Activated CD4-positive, alpha-beta memory T cell treated with anti-CD3 and anti-CD28 coated beads for 36 hours (primary cell): ENCODE measurements at regions of chr9 and their contacts with region 1.

Region 1: DNA sequence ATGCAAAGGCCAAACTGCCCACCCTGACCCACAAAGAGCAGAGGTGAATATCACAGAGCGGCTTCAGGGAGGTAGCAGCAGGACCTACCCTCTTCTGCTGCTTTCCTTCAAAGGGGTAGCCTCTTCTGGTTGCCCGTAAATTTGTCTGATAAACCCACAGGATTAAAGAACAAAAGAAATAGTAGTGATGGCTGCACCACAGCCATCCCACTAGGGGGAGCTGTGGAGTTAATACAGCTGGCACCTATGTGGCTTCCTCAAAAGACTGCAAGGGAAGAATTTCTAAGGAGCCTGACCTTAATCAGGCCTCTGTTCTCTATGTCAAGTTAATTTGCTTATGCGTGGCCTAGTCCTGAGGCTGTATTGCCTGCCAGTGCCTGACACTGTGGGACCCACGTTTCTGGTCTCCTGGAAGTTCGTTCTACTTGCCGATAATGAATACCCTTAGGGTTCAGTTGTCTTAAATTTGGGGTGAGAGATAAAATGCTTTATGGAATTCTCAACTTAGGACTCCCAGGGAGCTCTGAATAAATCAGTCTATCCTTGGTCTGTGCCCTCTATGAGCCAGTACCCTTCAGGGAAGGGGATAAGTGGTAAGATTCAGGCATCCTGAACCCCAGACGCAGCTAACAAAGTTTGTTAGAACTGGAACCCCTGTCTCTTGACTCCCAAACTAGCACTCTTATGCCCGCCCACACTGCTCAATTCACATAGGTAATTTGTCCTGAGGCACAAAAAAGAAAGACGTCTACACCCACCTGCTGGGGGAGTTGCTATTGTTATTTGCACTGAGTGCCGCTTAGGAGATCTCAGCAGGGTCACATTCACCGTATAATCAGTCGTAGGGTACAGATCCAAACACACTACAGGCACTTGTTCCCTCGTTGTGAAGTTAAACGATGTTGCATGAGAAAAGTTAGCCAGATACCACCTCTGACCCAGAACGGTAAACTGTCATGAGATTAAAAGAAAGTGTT is 77.1 kb downstream of the SUSD1 start:
- DNase-seq: peak; percentile 74
- H3K4me3 Mint-ChIP-seq: no peak overlapping the region
- H3K27ac Mint-ChIP-seq: no peak overlapping the region
- H3K4me1 Mint-ChIP-seq: peaks cover 22% of the 10 kb centered on the region
- H3K27me3 Mint-ChIP-seq: no peaks in the 10 kb centered on the region

Region 2: DNA sequence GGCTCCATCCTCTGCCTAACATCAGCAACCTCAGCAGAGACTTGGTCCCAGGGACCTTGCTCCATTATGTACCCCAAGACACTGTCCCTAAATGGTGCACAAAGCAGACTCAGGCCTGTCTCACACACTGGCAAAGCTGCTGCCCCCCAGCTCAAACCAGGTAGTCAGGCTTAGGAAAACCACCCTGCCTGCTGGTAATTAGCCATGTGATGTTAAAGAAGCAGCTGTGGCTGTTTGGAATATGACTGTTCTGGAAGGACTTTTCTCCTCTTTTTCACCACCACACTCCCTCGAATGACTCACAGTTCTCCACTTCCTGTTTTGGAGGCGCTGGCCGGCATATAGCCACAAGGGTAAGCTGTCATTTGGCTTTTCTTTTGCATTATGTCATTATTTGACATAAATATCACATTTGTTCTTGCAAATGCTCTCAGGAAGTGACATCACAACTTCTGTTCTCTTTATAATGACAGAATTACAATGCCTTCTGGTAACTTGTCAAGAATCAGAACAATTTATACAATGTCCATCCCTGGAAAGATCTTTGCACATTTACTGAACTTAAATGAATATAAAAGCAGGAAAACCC is 36.8 kb before region 1 on chr9:
- CTCF ChIA-PET with region 1: no interaction called
- POLR2A ChIA-PET with region 1: no interaction called
- intact Hi-C with region 1: no loop called
- DNase-seq: peak; percentile 71
- H3K4me3 Mint-ChIP-seq: no peak overlapping the region
- H3K27ac Mint-ChIP-seq: no peak overlapping the region
- H3K4me1 Mint-ChIP-seq: peaks cover 20% of the 10 kb centered on the region
- H3K27me3 Mint-ChIP-seq: no peaks in the 10 kb centered on the region

Region 3: DNA sequence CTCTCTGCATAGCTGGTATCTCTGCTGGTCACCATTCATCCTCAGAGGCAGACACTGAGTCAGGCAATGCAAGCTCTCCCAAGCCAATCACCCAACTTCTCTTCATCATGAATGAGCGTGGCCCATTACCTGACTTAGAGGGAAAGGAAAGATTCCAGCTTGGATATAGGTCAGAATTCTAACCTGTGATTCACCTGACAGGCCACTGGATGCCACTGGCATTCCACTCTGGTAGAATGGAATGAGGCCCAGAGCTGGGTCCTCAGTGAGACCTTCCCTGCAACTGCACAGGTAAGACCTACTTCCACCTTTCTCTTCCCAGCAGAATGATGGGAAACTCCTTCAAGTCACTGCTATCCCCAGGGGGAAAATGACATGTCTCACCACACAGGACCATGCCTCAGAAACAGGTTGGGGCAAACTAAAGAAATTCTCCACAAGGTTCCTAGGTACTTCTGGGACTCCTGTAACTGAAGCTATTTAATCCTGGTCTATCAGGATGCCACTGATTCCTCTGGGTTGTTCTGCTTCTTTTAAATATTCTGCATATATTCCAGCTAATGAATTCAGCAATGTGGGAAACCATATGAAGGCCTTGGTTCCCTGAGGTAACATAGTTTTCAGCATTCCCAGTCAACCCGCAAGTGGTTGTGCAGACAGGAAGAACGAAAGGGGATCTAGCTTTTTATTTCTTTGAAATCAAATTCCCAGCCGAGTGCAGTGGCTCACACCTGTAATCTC is 15.1 kb after region 1 on chr9:
- CTCF ChIA-PET with region 1: interaction called, 10 read pairs
- POLR2A ChIA-PET with region 1: no interaction called
- intact Hi-C with region 1: no loop called
- DNase-seq: peak; percentile 25
- H3K4me3 Mint-ChIP-seq: no peak overlapping the region
- H3K27ac Mint-ChIP-seq: no peak overlapping the region
- H3K4me1 Mint-ChIP-seq: no peaks in the 10 kb centered on the region
- H3K27me3 Mint-ChIP-seq: no peaks in the 10 kb centered on the region

Region 4: GRCh38 chr9:112180387-112180881 is 82.4 kb after region 1 on chr9:
- CTCF ChIA-PET with region 1: no interaction called
- POLR2A ChIA-PET with region 1: no interaction called
- intact Hi-C with region 1: loop called (anchors 5 kb)
- DNase-seq: peak; percentile 74
- H3K4me3 Mint-ChIP-seq: peak overlapping the region; percentile 6
- H3K27ac Mint-ChIP-seq: peak overlapping the region; percentile 40
- H3K4me1 Mint-ChIP-seq: peaks cover 36% of the 10 kb centered on the region
- H3K27me3 Mint-ChIP-seq: peaks cover 5% of the 10 kb centered on the region

Region 5: GRCh38 chr9:112717661-112718341 is 619.8 kb after region 1 on chr9 and contains the start of gene INIP:
- CTCF ChIA-PET with region 1: interaction called, 3 read pairs
- POLR2A ChIA-PET with region 1: no interaction called
- intact Hi-C with region 1: loop called (anchors 5 kb)
- DNase-seq: peak; percentile 99
- H3K4me3 Mint-ChIP-seq: peak within 1 kb of the TSS; percentile 90
- H3K27ac Mint-ChIP-seq: peak within 1 kb of the TSS; percentile 93
- H3K4me1 Mint-ChIP-seq: peaks cover 35% of the 10 kb centered on the region
- H3K27me3 Mint-ChIP-seq: no peaks in the 10 kb centered on the region
- total RNA-seq, gene INIP: 35.1 to 37.8 TPM